Tibial artery (tissue), 4 donors: ENCODE measurements at regions of chr12 and their contacts with region 1.

Region 1: DNA sequence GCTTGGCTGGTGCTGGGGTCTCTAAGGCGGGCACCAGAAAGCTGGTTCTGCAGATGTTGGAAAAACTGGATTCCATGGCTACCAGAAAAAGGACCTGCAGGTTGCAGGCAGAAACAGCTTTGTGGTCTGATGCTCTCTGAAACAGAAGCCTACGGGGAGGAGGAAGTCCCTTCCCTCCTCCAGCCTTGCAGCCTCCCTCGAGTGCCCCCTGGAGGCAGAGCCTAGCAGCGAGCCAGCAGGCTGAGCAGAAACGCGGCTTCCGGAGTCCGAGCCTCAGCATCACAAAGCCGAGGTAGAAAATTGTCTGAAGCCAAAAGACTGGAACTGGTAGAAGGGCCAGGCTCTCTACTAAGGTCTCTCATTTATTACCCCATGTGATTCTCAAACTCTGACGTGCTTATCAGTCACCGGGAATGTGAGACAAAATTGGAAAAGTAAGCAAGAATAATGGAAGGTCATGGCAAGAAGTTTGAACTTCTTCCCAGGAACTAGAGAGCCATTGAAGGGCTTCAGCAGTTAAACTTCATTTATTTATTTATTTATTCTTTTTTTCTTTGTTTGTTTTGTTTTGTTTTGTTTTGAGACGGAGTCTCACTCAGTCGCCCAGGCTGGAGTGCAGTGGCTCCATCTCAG is 82.2 kb upstream of the CPSF6 start:
- DNase-seq: peak; percentile 77 to 87
- H3K4me3 ChIP-seq: no peak overlapping the region
- H3K27ac ChIP-seq: no peak overlapping the region
- H3K4me1 ChIP-seq: peaks cover 0 to 7% (median 0%) of the 10 kb centered on the region in 4 donors
- H3K27me3 ChIP-seq: peaks cover 0 to 3% of the 10 kb centered on the region in 2 donors
- CTCF ChIP-seq: peak; percentile 63 to 92

Region 2: GRCh38 chr12:68163560-68164081 is 993.5 kb before region 1 on chr12:
- intact Hi-C with region 1: no loop called
- DNase-seq: no peak
- H3K4me3 ChIP-seq: no peak overlapping the region
- H3K27ac ChIP-seq: no peak overlapping the region
- H3K4me1 ChIP-seq: no peaks in the 10 kb centered on the region
- H3K27me3 ChIP-seq: no peaks in the 10 kb centered on the region
- CTCF ChIP-seq: no peak

Region 3: GRCh38 chr12:69173368-69173767 is 16.2 kb after region 1 on chr12:
- intact Hi-C with region 1: no loop called
- DNase-seq: no peak
- H3K4me3 ChIP-seq: no peak overlapping the region
- H3K27ac ChIP-seq: no peak overlapping the region
- H3K4me1 ChIP-seq: no peaks in the 10 kb centered on the region
- H3K27me3 ChIP-seq: no peaks in the 10 kb centered on the region
- CTCF ChIP-seq: no peak

Region 4: GRCh38 chr12:69254046-69254445 is 96.9 kb after region 1 on chr12:
- intact Hi-C with region 1: loop called (anchors 5 kb)
- DNase-seq: no peak
- H3K4me3 ChIP-seq: no peak overlapping the region
- H3K27ac ChIP-seq: no peak overlapping the region
- H3K4me1 ChIP-seq: peaks cover 0 to 28% (median 4%) of the 10 kb centered on the region in 4 donors
- H3K27me3 ChIP-seq: no peaks in the 10 kb centered on the region
- CTCF ChIP-seq: peak; percentile 52 to 55

Region 5: DNA sequence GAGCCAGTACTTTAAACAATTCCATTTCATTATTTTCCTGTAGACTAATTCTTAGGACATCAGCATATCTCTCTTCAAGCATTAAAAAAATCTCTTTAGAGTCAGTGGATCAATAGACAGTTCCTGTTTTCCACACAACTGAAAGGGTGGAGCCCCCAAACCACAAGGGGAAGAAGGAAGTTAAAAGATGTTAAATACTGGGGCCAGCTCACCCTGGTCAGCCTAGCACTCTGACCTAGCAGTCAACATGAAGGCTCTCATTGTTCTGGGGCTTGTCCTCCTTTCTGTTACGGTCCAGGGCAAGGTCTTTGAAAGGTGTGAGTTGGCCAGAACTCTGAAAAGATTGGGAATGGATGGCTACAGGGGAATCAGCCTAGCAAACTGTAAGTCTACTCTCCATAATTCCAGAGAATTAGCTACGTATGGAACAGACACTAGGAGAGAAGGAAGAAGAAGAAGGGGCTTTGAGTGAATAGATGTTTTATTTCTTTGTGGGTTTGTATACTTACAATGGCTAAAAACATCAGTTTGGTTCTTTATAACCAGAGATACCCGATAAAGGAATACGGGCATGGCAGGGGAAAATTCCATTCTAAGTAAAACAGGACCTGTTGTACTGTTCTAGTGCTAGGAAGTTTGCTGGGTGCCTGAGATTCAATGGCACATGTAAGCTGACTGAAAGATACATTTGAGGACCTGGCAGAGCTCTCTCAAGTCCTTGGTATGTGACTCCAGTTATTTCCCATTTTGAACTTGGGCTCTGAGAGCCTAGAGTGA is 191.2 kb after region 1 on chr12 and contains the start of gene LYZ:
- intact Hi-C with region 1: loop called (anchors 10 kb)
- DNase-seq: no peak
- H3K4me3 ChIP-seq: peak within 1 kb of the TSS in 1 of 2 donors; percentile 17
- H3K27ac ChIP-seq: no peak within 1 kb of the TSS
- H3K4me1 ChIP-seq: no peaks in the 10 kb centered on the region
- H3K27me3 ChIP-seq: no peaks in the 10 kb centered on the region
- CTCF ChIP-seq: no peak

Region 6: GRCh38 chr12:69879041-69879960 is 722.2 kb after region 1 on chr12:
- intact Hi-C with region 1: no loop called
- DNase-seq: peak; percentile 61 to 76
- H3K4me3 ChIP-seq: peak overlapping the region in 1 of 2 donors; percentile 10
- H3K27ac ChIP-seq: no peak overlapping the region
- H3K4me1 ChIP-seq: peaks cover 0 to 7% (median 3%) of the 10 kb centered on the region in 4 donors
- H3K27me3 ChIP-seq: no peaks in the 10 kb centered on the region
- CTCF ChIP-seq: peak; percentile 86 to 91